ENCODE measurements at regions of chr3 and their contacts with region 1.

Region 1: DNA sequence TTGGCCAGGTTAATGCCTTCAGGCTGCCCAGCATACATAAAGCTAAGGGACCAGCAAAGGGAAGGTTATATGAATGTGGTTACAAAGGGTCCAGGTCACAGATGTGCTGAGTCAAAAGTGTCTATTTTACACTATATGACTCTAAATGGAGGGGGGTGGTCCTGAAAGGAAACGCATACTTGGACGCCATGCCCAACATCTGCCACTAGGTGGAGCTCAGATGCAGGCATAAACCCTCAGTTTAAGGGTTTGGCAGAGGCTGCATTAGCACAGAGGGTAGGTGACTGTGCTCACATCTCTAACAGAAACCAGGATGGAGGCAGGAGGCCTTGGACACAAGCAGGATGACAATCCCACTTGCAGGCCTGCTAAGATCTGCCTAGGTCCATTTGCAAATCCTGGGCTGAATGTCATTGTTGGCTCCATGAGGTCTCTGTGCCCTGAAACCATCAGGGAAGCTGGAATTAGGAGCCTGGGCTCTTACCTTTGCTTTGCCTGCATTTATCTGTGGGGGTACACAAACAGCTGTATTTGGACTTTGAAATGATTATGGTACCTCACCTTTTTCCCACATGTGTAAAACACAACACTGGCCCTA is 55.8 kb downstream of the ZNF621 start:
- DNase-seq: peak; percentile 52 to 74 (median 73)
- H3K4me3 ChIP-seq: no peak overlapping the region
- H3K27ac ChIP-seq: no peak overlapping the region
- H3K4me1 ChIP-seq: peaks cover 3% of the 10 kb centered on the region
- H3K27me3 ChIP-seq: no peaks in the 10 kb centered on the region
- CTCF ChIP-seq: peak; percentile 83 to 86 (median 86)
- EP300 ChIP-seq: no peak
- POLR2A ChIP-seq: no peak

Region 2: DNA sequence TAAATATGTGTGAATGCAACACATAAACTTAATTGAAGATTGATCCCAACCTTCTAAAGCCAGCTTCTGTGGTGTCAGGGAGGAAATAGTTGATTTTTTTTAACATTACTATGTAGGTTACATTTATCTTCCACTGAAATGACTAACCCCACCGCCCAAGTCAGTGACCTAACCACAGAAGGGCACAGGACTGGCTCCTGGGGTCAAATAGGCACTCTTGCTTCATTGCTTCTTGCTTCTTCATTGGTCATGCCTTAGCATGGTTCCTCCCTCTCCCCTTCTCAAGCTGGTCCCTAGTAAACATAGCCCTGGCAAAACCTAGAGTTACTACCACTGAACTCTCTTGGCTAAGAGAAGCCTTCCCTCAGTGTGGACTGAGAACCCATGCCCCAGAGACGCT is 258.8 kb before region 1 on chr3:
- intact Hi-C with region 1: no loop called
- DNase-seq: no peak
- H3K4me3 ChIP-seq: no peak overlapping the region
- H3K27ac ChIP-seq: no peak overlapping the region
- H3K4me1 ChIP-seq: no peaks in the 10 kb centered on the region
- H3K27me3 ChIP-seq: no peaks in the 10 kb centered on the region
- CTCF ChIP-seq: no peak
- EP300 ChIP-seq: no peak
- POLR2A ChIP-seq: no peak

Region 3: GRCh38 chr3:40920041-40920440 is 339.4 kb after region 1 on chr3:
- intact Hi-C with region 1: loop called in 1 of 4 experiments (anchors 10 kb)
- DNase-seq: no peak
- H3K4me3 ChIP-seq: no peak overlapping the region
- H3K27ac ChIP-seq: no peak overlapping the region
- H3K4me1 ChIP-seq: peaks cover 7% of the 10 kb centered on the region
- H3K27me3 ChIP-seq: no peaks in the 10 kb centered on the region
- CTCF ChIP-seq: no peak
- EP300 ChIP-seq: no peak
- POLR2A ChIP-seq: no peak

Region 4: DNA sequence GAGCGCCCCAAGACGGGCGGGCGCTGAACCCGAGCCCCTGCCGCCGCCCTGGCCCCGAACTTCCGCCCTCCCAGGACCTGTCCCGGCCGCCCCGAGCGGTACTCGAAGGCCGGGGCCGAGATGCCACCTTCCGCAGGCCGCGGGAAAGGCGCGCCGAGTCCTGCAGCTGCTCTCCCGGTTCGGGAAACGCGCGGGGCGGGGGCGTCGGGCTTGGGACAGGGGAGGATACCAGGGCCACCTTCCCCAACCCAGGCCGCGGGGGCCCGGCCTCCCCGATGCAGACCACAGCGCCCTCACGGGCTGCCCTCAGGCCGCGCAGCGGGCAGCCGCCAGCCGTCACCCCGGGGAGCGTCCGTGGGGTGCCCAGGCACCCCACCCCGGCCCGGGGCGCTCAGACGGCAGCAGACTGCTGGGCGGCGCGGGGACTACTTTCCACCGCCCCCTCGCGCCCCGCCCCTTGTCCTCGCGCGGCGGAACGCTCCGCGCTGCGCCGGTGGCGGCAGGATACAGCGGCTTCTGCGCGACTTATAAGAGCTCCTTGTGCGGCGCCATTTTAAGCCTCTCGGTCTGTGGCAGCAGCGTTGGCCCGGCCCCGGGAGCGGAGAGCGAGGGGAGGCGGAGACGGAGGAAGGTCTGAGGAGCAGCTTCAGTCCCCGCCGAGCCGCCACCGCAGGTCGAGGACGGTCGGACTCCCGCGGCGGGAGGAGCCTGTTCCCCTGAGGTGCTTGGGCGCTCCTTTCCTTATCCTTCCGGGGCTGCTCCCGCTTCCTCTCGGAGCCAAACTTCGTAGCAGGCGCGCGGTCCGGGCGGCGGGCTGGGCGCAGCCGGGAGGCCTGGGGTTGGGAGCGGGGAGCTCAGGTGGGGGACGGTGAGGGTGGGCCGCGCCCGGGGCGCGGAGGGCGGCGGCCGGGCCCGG is 618.6 kb after region 1 on chr3 and contains the start of gene CTNNB1:
- intact Hi-C with region 1: loop called in 2 of 4 experiments (anchors 5 to 10 kb)
- DNase-seq: peak; percentile 92 to 97 (median 96)
- H3K4me3 ChIP-seq: peak within 1 kb of the TSS; percentile 89
- H3K27ac ChIP-seq: peak within 1 kb of the TSS; percentile 91 to 93
- H3K4me1 ChIP-seq: no peaks in the 10 kb centered on the region
- H3K27me3 ChIP-seq: no peaks in the 10 kb centered on the region
- CTCF ChIP-seq: peak in 2 of 3 donors; percentile 32 to 55
- EP300 ChIP-seq: no peak
- POLR2A ChIP-seq: peak; percentile 100
- total RNA-seq, gene CTNNB1: 311 to 495 (median 405) TPM

Region 5: DNA sequence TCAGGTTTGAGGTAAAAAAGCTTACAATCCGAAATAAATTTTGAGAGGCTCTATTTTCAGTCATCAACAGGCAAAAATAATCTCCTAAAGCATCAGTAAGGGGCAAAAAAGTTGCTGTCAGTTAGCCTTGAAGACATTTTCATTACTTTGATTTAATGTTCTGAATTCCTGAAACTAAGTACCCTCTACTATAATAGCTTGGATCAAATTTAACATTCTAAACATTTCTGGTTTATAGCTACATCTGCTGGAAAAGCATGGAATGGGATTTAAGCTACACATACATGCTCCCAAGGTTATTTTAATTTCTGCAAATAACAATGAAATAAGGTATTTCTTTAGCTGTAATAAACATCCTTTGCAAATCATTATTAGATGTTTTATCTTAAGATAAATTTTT is 1135.9 kb after region 1 on chr3:
- intact Hi-C with region 1: loop called in 3 of 4 experiments (anchors 5 to 10 kb)
- DNase-seq: no peak
- H3K4me3 ChIP-seq: no peak overlapping the region
- H3K27ac ChIP-seq: no peak overlapping the region
- H3K4me1 ChIP-seq: no peaks in the 10 kb centered on the region
- H3K27me3 ChIP-seq: no peaks in the 10 kb centered on the region
- CTCF ChIP-seq: peak in 2 of 3 donors; percentile 28 to 40
- EP300 ChIP-seq: no peak
- POLR2A ChIP-seq: no peak

Region 6: DNA sequence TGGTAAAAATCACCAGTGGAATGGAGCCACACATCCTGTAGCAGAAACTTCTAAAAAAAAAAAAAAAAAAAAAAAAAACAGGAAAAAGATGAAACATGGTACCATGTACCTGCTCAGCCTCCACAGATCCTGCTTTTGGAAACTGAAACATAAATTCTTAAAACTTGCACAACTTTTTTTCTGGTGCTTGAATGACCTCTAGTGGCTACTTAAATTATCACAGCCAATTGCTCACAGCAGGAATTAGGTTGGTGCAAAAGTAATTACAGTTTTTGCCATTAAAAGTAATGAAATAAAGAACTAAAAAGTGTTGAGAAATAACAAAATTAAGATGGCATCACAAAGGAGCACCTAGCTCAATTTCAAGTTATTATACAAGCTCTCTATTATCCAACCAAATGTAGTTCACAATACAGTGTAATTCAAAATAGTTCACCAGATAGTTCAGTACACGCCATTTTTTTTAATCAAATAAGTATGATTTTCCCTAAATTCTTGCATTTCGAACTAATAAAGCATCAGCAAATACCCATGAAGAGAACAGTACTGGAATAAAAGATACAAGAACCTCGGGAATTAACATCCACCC is 1300.7 kb after region 1 on chr3:
- intact Hi-C with region 1: loop called (anchors 2 to 5 kb)
- DNase-seq: no peak
- H3K4me3 ChIP-seq: no peak overlapping the region
- H3K27ac ChIP-seq: no peak overlapping the region
- H3K4me1 ChIP-seq: no peaks in the 10 kb centered on the region
- H3K27me3 ChIP-seq: no peaks in the 10 kb centered on the region
- CTCF ChIP-seq: peak; percentile 47 to 73 (median 69)
- EP300 ChIP-seq: no peak
- POLR2A ChIP-seq: no peak

Measured in ovary (tissue), 10 donors.